Prostate gland (tissue), 2 donors: ENCODE measurements at regions of chr16 and their contacts with region 1.

Region 1: GRCh38 chr16:10521681-10522274 is 58.6 kb downstream of the EMP2 start:
- DNase-seq: peak; percentile 47
- H3K4me3 ChIP-seq: no peak overlapping the region
- H3K27ac ChIP-seq: peak overlapping the region; percentile 86 to 90
- H3K4me1 ChIP-seq: peaks cover 2% of the 10 kb centered on the region
- H3K27me3 ChIP-seq: no peaks in the 10 kb centered on the region
- CTCF ChIP-seq: peak; percentile 53 to 77 (median 68)
- POLR2A ChIP-seq: no peak

Region 2: GRCh38 chr16:10678655-10679054 is 156.9 kb after region 1 on chr16:
- intact Hi-C with region 1: no loop called
- DNase-seq: no peak
- H3K4me3 ChIP-seq: no peak overlapping the region
- H3K27ac ChIP-seq: no peak overlapping the region
- H3K4me1 ChIP-seq: no peaks in the 10 kb centered on the region
- H3K27me3 ChIP-seq: no peaks in the 10 kb centered on the region
- CTCF ChIP-seq: no peak
- POLR2A ChIP-seq: no peak

Region 3: DNA sequence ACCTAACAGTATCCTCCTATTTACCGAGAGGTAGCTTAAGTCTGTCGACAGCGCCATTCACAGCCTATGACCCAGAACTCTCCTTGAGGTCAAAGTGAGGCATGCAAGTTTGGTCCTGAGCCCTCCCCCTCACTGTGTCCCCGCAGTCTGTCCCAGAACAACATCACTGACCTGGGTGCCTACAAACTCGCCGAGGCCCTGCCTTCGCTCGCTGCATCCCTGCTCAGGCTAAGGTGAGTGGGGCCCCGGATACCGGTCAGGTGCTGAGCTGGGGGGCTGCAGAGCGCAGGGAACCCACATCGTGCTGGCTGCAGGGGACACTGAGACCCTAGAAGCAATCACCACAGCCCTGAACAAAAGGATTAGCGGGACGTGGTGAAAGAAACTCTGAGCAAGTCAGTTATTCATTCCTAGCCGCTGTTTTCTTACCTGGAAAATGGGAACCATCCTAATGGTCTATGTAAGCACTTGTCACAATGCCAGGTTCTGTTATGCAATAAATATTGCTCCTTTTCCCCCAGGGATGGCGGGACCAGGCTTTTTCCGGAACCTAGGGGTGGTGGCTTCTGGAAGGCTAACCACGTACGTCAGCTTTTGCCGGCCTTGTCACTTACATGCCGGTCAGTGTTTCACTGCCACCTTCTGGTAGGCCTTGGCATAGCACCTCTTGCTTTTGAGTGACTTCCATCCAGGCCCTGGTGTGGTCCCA is 396.7 kb after region 1 on chr16:
- intact Hi-C with region 1: loop called (anchors 5 kb)
- DNase-seq: peak; percentile 91
- H3K4me3 ChIP-seq: peak overlapping the region in 1 of 2 donors; percentile 9
- H3K27ac ChIP-seq: no peak overlapping the region
- H3K4me1 ChIP-seq: no peaks in the 10 kb centered on the region
- H3K27me3 ChIP-seq: no peaks in the 10 kb centered on the region
- CTCF ChIP-seq: peak; percentile 81 to 94 (median 87)
- POLR2A ChIP-seq: no peak